Activated T-helper 1 cell treated with anti-CD3 and anti-CD28 coated beads, Interleukin-12 subunit alpha, Interleukin-12 subunit beta, Interleukin-2, Interleukin-4 antibody, amounts not matched to agents 30 ng/mL and 10 ng/mL and 1 ng/mL, durations not matched to agents 14 hours and 24 hours and 36 hours (primary cell): ENCODE measurements at regions of chr3 and their contacts with region 1.

Region 1: GRCh38 chr3:50088725-50089608 is at the start of gene RBM5:
- DNase-seq: peak; percentile 91
- H3K4me3 Mint-ChIP-seq: peak within 1 kb of the TSS; percentile 97
- H3K27ac Mint-ChIP-seq: peak within 1 kb of the TSS; percentile 95
- H3K4me1 Mint-ChIP-seq: peaks cover 31% of the 10 kb centered on the region
- H3K27me3 Mint-ChIP-seq: no peaks in the 10 kb centered on the region
- total RNA-seq, gene RBM5: 157 and 162 TPM in 2 replicates

Region 2: GRCh38 chr3:49929331-49930240 is 159.4 kb before region 1 on chr3 and contains the start of gene MON1A:
- intact Hi-C with region 1: loop called (anchors 1 kb)
- DNase-seq: peak; percentile 88
- H3K4me3 Mint-ChIP-seq: peak within 1 kb of the TSS; percentile 90
- H3K27ac Mint-ChIP-seq: peak within 1 kb of the TSS; percentile 81
- H3K4me1 Mint-ChIP-seq: peaks cover 21% of the 10 kb centered on the region
- H3K27me3 Mint-ChIP-seq: no peaks in the 10 kb centered on the region
- total RNA-seq, gene MON1A: 15.5 and 17.3 TPM in 2 replicates